ENCODE measurements at regions of chr9 and their contacts with region 1.

Region 1: GRCh38 chr9:136748666-136749611 is 614 bp upstream of the LCN6 start:
- DNase-seq: no peak
- H3K4me3 ChIP-seq: no peak overlapping the region
- H3K27ac ChIP-seq: no peak overlapping the region
- H3K4me1 ChIP-seq: no peaks in the 10 kb centered on the region
- H3K27me3 ChIP-seq: no peaks in the 10 kb centered on the region
- CTCF ChIP-seq: no peak
- EP300 ChIP-seq: no peak
- RAD21 ChIP-seq: no peak

Region 2: DNA sequence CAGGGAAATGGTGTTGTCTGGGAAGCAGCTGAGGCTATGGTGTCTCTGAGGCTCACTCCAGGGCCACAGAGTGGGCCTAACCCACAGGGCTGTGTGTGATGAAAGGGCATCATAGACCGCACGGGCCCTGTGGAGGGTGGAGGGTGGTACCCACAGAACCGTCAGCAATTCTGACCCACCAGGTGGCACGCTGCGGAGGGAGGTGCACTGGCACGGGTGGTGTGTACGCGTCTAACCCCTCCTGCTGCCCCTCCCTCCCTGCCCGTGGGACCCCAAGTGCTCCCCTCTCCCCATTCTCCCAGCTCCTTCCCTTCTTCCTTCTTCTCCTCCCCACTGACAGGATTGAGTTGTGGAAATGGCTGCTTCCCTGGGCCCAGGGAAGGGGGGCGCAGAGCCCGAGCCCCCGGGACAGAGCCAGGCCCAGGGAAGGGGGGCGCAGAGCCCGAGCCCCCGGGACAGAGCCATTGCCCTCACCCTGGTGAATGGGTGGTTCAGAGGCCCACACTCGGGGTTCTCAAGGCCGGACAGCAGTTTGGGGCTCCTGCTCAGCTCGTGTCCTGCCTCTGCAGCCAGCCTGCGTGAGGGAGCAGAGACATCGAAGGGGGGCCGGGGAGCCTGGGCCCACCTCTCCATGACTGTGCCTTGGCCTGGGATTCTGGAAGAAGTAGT is 13.0 kb before region 1 on chr9:
- CTCF ChIA-PET with region 1: no interaction called
- POLR2A ChIA-PET with region 1: no interaction called
- DNase-seq: no peak
- H3K4me3 ChIP-seq: no peak overlapping the region
- H3K27ac ChIP-seq: no peak overlapping the region
- H3K4me1 ChIP-seq: peaks cover 0 to 6% of the 10 kb centered on the region in 2 experiments; a peak in 1 of 4 replicates
- H3K27me3 ChIP-seq: no peaks in the 10 kb centered on the region
- CTCF ChIP-seq: no peak
- EP300 ChIP-seq: no peak
- RAD21 ChIP-seq: no peak

Region 3: DNA sequence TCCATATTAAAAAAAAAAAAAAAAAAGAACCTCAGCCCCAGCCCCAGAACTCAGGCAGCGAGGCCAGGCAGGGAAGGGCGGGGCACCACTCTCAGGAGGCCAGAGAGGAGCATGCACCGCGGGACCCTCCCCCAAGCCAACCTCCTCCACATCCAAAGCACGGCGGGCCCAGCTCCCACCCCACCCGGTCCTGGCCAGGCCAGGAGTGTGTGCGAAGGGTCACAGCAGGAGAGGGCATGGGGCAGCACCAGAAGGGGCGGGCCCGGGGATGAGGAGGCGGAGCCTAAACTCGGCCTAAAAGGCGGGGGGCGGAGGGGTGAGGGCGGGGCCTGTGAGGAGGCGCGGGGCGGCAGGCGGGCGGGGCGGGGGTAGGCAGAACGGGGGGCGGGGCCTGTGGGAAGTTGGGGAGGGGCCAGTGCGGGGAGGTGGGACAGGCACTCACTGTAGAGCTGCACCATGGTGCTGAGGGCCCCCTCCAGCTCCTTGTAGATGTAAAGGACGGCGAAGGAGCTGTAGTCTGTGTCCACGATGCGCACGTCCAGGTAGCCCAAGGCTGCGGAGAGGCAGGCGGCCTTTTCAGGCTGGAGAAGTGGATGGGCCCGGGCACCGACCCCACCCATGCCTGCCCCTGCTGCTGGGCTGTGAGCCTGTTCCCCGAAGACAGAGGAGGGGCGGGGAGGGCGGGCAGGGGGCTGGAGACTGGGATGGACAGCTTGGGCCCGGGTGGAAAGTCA is 14.1 kb after region 1 on chr9:
- CTCF ChIA-PET with region 1: interaction called, 19 read pairs
- POLR2A ChIA-PET with region 1: no interaction called
- DNase-seq: peak; percentile 96
- H3K4me3 ChIP-seq: no peak overlapping the region
- H3K27ac ChIP-seq: no peak overlapping the region
- H3K4me1 ChIP-seq: peaks cover 0 to 13% of the 10 kb centered on the region in 2 experiments; a peak in 1 of 4 replicates
- H3K27me3 ChIP-seq: no peaks in the 10 kb centered on the region; the same call in 1 of the 2 replicates
- CTCF ChIP-seq: no peak
- EP300 ChIP-seq: no peak
- RAD21 ChIP-seq: no peak

Region 4: GRCh38 chr9:136808075-136808879 is 59.3 kb after region 1 on chr9:
- CTCF ChIA-PET with region 1: no interaction called
- POLR2A ChIA-PET with region 1: no interaction called
- DNase-seq: peak; percentile 78
- H3K4me3 ChIP-seq: peak overlapping the region; percentile 66 to 96
- H3K27ac ChIP-seq: peak overlapping the region; percentile 55 to 86; a peak in 3 of 4 replicates
- H3K4me1 ChIP-seq: peaks cover 20 to 22% of the 10 kb centered on the region in 2 experiments; a peak in 3 of 4 replicates
- H3K27me3 ChIP-seq: no peaks in the 10 kb centered on the region
- CTCF ChIP-seq: no peak
- EP300 ChIP-seq: no peak
- RAD21 ChIP-seq: no peak

Measured in SK-N-SH (cell line).